ENCODE measurements at regions of chr20 and their contacts with region 1.

Region 1: GRCh38 chr20:51404298-51405060 is 138.0 kb downstream of the NFATC2 start:
- DNase-seq: peak; percentile 92
- ATAC-seq: peak; percentile 85
- H3K4me3 ChIP-seq: no peak overlapping the region
- H3K4me3 Mint-ChIP-seq: peak overlapping the region; percentile 49
- H3K27ac ChIP-seq: peak overlapping the region; percentile 86 to 97
- H3K27ac Mint-ChIP-seq: peak overlapping the region; percentile 99
- H3K4me1 ChIP-seq: peaks cover 62 to 74% of the 10 kb centered on the region in 2 donors
- H3K4me1 Mint-ChIP-seq: peaks cover 77% of the 10 kb centered on the region
- H3K27me3 ChIP-seq: no peaks in the 10 kb centered on the region
- H3K27me3 Mint-ChIP-seq: no peaks in the 10 kb centered on the region
- CTCF ChIP-seq: no peak

Region 2: GRCh38 chr20:51417250-51418136 is 13.0 kb after region 1 on chr20:
- CTCF ChIA-PET with region 1: interaction called, 20 read pairs
- POLR2A ChIA-PET with region 1: interaction called, 12 read pairs
- intact Hi-C with region 1: loop called (anchors 1 kb)
- DNase-seq: no peak
- ATAC-seq: no peak
- H3K4me3 ChIP-seq: no peak overlapping the region
- H3K4me3 Mint-ChIP-seq: no peak overlapping the region
- H3K27ac ChIP-seq: peak overlapping the region in 1 of 2 donors; percentile 75
- H3K27ac Mint-ChIP-seq: peak overlapping the region; percentile 56
- H3K4me1 ChIP-seq: peaks cover 48 to 65% of the 10 kb centered on the region in 2 donors
- H3K4me1 Mint-ChIP-seq: peaks cover 63% of the 10 kb centered on the region
- H3K27me3 ChIP-seq: no peaks in the 10 kb centered on the region
- H3K27me3 Mint-ChIP-seq: no peaks in the 10 kb centered on the region
- CTCF ChIP-seq: no peak

Region 3: DNA sequence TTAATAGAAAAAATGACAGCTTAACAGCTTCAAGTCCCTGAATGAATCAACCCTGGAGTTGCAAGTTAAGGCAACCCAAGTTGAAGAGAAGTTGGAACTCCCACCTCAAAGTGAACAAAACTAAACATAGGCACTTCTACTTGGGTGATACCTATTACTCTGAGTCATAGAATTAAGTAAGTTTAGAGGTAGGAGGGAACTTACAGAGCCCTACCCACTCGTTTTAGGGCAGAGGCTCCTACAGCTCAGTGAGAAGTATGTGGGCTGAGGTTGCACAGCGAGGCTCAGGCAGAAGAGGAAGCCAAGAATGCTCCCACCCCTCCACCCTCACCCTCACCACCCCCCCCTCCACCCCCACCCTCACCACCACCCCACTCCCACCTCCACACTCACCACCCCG is 95.8 kb after region 1 on chr20:
- CTCF ChIA-PET with region 1: interaction called, 3 read pairs
- POLR2A ChIA-PET with region 1: no interaction called
- intact Hi-C with region 1: loop called (anchors 5 kb)
- DNase-seq: peak; percentile 63
- ATAC-seq: peak; percentile 76
- H3K4me3 ChIP-seq: no peak overlapping the region
- H3K4me3 Mint-ChIP-seq: no peak overlapping the region
- H3K27ac ChIP-seq: peak overlapping the region; percentile 11 to 25
- H3K27ac Mint-ChIP-seq: peak overlapping the region; percentile 29
- H3K4me1 ChIP-seq: peaks cover 71 to 89% of the 10 kb centered on the region in 2 donors
- H3K4me1 Mint-ChIP-seq: peaks cover 89% of the 10 kb centered on the region
- H3K27me3 ChIP-seq: no peaks in the 10 kb centered on the region
- H3K27me3 Mint-ChIP-seq: no peaks in the 10 kb centered on the region
- CTCF ChIP-seq: no peak